ENCODE measurements at regions of chr2 and their contacts with region 1.

Region 1: GRCh38 chr2:25976983-25977741 is 5.1 kb downstream of the KIF3C start:
- ATAC-seq: peak in 5 of 8 experiments; percentile 49 to 82 (median 72)
- H3K4me3 ChIP-seq: peak overlapping the region; percentile 13 to 81 (median 31)
- H3K27ac ChIP-seq: peak overlapping the region; percentile 52 to 58
- H3K4me1 ChIP-seq: peaks cover 61 to 65% of the 10 kb centered on the region in 2 donors

Region 2: GRCh38 chr2:26157580-26157979 is 180.4 kb after region 1 on chr2:
- in situ Hi-C with region 1: loop called in 1 of 9 experiments (anchors 10 kb)
- ATAC-seq: no peak
- H3K4me3 ChIP-seq: no peak overlapping the region
- H3K27ac ChIP-seq: no peak overlapping the region
- H3K4me1 ChIP-seq: no peaks in the 10 kb centered on the region

Measured in motor neuron (in vitro differentiated cells).